HepG2 (cell line): ENCODE measurements at regions of chr12 and their contacts with region 1.

Region 1: GRCh38 chr12:110280779-110281548 is at the start of gene ATP2A2:
- DNase-seq: peak; percentile 73
- ATAC-seq: peak; percentile 83
- H3K4me3 ChIP-seq: peak within 1 kb of the TSS; percentile 73 to 88 (median 73)
- H3K27ac ChIP-seq: peak within 1 kb of the TSS; percentile 92
- H3K4me1 ChIP-seq: peaks cover 63% of the 10 kb centered on the region
- H3K27me3 ChIP-seq: no peaks in the 10 kb centered on the region
- CTCF ChIP-seq: 0 out of 2 replicates have a peak, but pooled peaks have one; percentile 7
- EP300 ChIP-seq: 0 out of 4 replicates have a peak, but pooled peaks of 1 of the 2 experiments have one; percentile 6
- POLR2A ChIP-seq: peak; percentile 76 to 91
- RAD21 ChIP-seq: peak; percentile 38
- total RNA-seq, gene ATP2A2: 79.2 and 85.5 TPM in 2 replicates

Region 2: DNA sequence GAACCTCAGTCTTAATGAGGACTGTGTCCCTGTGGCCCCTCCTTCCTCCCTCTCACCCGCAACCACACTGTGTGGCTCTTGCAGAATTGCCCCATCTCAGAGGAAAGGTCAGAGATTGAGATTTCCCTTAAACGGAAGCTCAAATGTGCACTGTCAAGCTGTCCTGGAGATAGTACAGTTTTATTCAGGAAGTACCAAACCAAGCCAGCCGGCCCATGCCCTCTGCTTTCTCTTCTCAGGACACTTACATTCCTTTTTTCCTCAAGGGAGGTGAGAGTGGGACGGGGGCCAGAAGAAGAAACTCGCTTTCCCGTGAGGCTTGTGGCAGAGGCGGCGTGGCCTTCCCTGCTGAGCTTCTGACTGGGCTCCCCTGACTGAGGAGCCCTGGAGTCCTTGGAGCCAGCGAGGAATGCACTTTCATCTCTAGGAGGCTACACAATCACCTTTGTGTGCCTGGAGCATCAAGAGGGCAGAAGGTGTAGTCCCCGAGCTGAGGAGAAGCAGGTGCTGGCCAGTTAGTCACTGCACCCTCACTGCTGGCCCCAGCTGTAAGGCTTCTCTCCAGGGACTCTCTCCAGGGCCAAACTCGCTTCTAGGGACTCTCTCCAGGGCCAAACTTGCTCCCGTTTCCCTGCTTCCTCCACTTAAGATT is 24.1 kb before region 1 on chr12:
- CTCF ChIA-PET with region 1: no interaction called
- POLR2A ChIA-PET with region 1: interaction called, 16 read pairs
- in situ Hi-C with region 1: no loop called
- intact Hi-C with region 1: no loop called
- DNase-seq: no peak
- ATAC-seq: peak; percentile 73
- H3K4me3 ChIP-seq: peak overlapping the region; percentile 13 to 48 (median 25)
- H3K27ac ChIP-seq: peak overlapping the region; percentile 41
- H3K4me1 ChIP-seq: peaks cover 60% of the 10 kb centered on the region
- H3K27me3 ChIP-seq: no peaks in the 10 kb centered on the region
- CTCF ChIP-seq: no peak
- EP300 ChIP-seq: no peak
- POLR2A ChIP-seq: no peak
- RAD21 ChIP-seq: no peak

Region 3: DNA sequence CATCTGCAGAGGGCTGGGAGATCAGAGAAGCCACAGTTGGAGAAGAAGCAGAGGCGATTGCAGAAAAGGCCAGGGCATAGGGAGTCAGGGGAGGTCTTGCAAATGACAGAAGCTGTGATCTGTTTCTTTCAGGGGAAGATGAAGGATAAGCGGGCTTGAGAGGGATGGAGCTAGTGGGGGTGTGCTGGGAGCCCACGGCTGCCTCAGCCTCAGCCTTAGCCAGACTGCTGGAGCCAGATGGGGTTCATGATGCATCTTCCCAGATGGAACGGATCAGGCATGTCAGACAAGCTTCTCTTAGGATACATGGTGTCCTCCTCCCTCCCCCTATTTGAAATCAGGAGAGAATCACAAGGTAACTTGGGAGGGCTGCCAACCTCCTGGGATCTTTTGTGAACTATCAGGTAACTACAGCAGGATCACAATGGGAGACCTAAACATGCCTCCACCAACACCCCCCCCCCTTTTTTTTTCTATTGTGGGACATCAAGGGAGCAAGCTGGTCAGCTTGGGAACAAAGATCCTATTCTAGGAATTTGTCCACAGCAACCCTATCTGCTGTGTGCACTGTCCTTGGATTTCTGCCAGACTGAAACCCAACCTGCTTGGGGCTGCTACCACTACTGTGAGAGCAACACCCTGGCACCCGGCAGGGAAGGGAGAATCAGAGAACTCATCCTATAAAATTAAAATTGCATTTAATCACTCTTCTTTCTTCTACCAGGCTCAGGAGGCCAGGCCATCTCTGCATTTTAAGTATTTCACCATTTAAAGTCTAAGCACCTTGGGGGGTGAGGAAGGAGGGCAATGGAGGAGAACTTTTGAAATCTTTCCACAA is 10.6 kb before region 1 on chr12:
- CTCF ChIA-PET with region 1: no interaction called
- POLR2A ChIA-PET with region 1: interaction called, 44 read pairs
- in situ Hi-C with region 1: no loop called
- intact Hi-C with region 1: no loop called
- DNase-seq: peak; percentile 95
- ATAC-seq: peak; percentile 95
- H3K4me3 ChIP-seq: peak overlapping the region; percentile 11 to 63 (median 35); a peak in 5 of 6 replicates
- H3K27ac ChIP-seq: peak overlapping the region; percentile 52
- H3K4me1 ChIP-seq: peaks cover 59% of the 10 kb centered on the region
- H3K27me3 ChIP-seq: no peaks in the 10 kb centered on the region
- CTCF ChIP-seq: no peak
- EP300 ChIP-seq: peak in 1 of 2 experiments; percentile 26; a peak in 1 of 4 replicates
- POLR2A ChIP-seq: no peak
- RAD21 ChIP-seq: no peak